ENCODE measurements at regions of chr14 and their contacts with region 1.

Region 1: GRCh38 chr14:91286530-91286937 is 42.0 kb upstream of the GPR68 start:
- DNase-seq: peak; percentile 71
- H3K4me3 ChIP-seq: no peak overlapping the region
- CTCF ChIP-seq: peak; percentile 84

Region 2: GRCh38 chr14:90301668-90302090 is 984.9 kb before region 1 on chr14:
- in situ Hi-C with region 1: loop called (anchors 25 kb)
- DNase-seq: peak; percentile 55
- H3K4me3 ChIP-seq: no peak overlapping the region
- CTCF ChIP-seq: peak; percentile 51

Region 3: DNA sequence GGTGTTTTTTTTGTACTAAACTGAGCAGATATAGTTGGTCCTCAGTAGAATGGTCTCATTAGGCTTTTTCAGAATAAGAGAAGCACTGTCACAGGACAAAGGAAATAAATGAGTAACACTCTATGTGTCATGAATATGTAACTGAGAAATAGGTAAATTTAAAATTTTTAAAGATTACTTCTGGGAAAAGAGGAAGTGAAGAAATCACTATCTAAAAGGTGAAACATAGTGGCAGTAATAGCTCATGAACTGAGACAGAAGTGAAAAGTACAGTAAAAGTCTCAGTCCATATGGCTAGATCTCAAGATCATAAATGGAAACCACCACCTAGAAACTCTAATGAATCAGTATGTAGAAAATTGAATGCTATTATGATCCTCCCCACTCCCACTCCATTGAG is 381.0 kb before region 1 on chr14:
- in situ Hi-C with region 1: loop called (anchors 5 kb)
- DNase-seq: no peak
- H3K4me3 ChIP-seq: no peak overlapping the region
- CTCF ChIP-seq: no peak

Region 4: GRCh38 chr14:91038438-91038837 is 248.1 kb before region 1 on chr14:
- in situ Hi-C with region 1: loop called (anchors 25 kb)
- DNase-seq: no peak
- H3K4me3 ChIP-seq: no peak overlapping the region
- CTCF ChIP-seq: no peak

Region 5: DNA sequence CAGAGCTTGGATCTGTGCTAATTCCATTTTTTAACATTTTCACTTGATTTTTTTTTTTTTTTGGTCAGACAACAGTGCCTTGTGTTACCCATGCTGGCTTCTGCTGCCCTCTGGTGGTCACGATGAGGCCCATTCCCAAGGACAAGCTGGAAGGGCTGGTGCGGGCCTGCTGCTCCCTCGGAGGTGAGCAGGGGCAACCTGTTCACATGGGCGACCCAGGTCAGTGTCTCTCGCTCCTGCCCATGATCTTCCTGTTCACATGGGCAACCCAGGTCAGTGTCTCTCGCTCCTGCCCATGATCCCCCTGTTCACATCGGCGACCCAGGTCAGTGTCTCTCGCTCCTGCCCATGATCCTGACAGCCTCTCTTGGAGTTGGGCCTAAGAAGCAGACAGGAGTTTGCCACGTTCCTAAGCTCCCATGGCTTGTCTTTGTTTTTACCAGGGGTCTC is 113.3 kb before region 1 on chr14:
- in situ Hi-C with region 1: loop called (anchors 25 kb)
- DNase-seq: peak; percentile 65
- H3K4me3 ChIP-seq: no peak overlapping the region
- CTCF ChIP-seq: peak; percentile 89

Region 6: DNA sequence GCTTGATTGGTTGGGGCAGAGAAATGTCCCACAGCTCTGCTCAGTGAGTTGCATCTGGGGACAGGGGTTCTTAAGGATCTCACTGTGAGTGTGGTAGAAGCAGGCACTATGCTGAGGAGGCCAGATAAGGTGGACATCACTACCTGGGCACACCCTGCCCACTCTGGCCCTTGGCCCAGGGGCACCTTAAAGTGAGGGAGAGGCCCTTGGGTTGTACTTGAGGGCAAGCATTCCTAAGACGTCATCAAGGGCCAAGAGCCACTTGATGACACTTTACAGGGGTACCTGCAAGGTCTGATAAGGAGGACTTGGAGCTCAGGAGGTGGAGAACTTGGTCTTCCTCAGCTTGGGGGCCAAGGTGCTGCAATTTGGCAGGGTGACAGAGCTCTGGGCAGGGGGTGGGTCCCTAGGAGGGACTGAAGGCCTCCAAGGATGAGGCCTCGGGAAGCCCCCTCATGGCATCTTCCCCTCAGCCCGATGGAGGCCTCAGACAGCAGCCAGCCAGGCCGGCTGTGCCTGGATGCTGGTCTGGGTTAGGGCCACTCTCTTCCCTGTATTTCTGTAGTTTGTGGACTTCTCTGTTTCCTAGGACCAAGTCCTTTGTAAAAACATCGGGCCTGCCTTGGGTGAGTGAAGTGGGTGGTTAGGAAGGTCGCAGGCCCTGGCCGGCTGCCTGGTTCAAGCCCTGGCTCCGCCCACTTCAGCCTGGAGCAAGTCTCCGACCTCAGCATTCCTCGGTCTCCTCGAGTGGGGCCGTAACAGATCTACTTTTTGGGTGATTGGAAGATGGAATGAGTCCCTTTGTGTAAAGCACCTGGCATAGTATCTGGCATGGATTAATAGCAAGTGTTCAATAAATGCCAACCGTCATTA is 66.8 kb before region 1 on chr14:
- in situ Hi-C with region 1: loop called (anchors 5 kb)
- DNase-seq: no peak
- H3K4me3 ChIP-seq: no peak overlapping the region
- CTCF ChIP-seq: no peak